T-cell (primary cell): ENCODE measurements at regions of chr12 and their contacts with region 1.

Region 1: DNA sequence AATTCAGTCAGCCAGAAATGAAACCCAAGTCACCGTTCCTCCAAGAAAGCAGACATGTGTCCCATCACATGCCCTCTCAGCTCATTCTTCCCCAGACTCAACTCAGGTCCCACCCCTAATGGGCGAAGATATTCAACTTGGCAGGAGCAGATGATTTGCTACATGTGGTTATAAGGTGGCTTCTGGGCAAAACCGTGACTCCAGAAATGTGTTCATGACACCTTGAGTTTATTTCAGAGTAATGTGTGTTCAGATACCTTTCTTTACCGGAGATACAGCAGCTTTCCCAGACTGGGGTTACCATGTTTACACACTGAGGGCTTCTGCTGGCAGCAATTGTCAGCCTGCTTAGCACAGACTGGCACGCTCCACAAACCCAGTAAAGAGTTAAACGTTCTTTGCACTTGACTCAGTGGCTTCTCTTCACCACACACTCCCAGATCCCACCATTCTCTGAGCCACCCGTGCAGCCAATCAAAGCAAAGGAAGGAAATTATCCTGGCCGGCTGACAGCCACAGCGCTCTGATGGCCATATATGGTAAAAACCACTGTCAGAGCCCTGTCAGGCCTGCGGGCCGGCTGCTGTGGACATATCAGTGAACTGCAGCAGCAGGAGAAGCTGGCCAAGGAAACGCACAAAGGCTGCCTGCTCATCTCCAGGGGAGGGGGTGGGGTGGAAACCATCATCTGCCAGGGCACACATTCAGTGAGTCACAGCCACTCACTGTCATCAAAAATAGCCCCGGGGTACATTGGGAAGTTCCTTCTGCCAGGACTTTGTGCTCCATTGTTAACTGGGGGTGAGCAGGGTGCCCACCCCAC is 39.9 kb downstream of the CORO1C start:
- DNase-seq: peak; percentile 21 to 69 (median 48)
- ATAC-seq: peak; percentile 63 to 81 (median 76)
- H3K4me3 ChIP-seq: peak overlapping the region; percentile 28 to 45
- H3K4me3 Mint-ChIP-seq: peak overlapping the region; percentile 50 to 81 (median 62)
- H3K27ac ChIP-seq: peak overlapping the region; percentile 55
- H3K27ac Mint-ChIP-seq: peak overlapping the region; percentile 44 to 78
- H3K4me1 ChIP-seq: peaks cover 35 to 46% of the 10 kb centered on the region in 2 experiments
- H3K4me1 Mint-ChIP-seq: peaks cover 62 to 71% (median 67%) of the 10 kb centered on the region in 3 donors
- H3K27me3 ChIP-seq: no peaks in the 10 kb centered on the region
- H3K27me3 Mint-ChIP-seq: no peaks in the 10 kb centered on the region

Region 2: GRCh38 chr12:108722992-108723766 is 31.8 kb after region 1 on chr12:
- CTCF ChIA-PET with region 1: no interaction called
- POLR2A ChIA-PET with region 1: interaction called in 1 of 2 experiments, 13 read pairs
- DNase-seq: no peak
- ATAC-seq: no peak
- H3K4me3 ChIP-seq: no peak overlapping the region
- H3K4me3 Mint-ChIP-seq: no peak overlapping the region
- H3K27ac ChIP-seq: no peak overlapping the region
- H3K27ac Mint-ChIP-seq: no peak overlapping the region
- H3K4me1 ChIP-seq: no peaks in the 10 kb centered on the region
- H3K4me1 Mint-ChIP-seq: peaks cover 7 to 19% (median 15%) of the 10 kb centered on the region in 3 donors
- H3K27me3 ChIP-seq: no peaks in the 10 kb centered on the region
- H3K27me3 Mint-ChIP-seq: no peaks in the 10 kb centered on the region